Ovary (tissue), 10 donors: ENCODE measurements at regions of chr19 and their contacts with region 1.

Region 1: DNA sequence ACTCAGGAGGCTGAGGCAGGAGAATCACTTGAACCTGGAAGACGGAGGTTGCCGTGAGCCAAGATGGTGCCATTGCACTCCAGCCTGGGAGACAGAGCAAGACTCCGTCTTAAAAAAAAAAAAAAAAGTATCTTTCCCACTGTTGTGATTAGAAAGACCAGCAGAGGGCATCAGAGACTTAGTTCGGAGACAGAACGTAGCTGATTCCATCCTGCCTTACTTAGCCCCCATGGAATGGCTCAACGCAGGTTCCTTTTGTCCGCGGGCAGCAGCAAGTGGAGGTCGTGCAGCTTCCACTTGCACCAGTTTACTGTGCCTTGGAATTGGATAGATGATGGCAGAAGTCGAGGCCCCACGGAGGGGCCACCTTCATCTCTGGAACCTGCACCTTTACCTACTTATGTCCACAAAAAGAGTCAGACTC is 8.1 kb downstream of the TIMM29 start:
- DNase-seq: peak; percentile 54 to 71 (median 58)
- H3K4me3 ChIP-seq: peak overlapping the region; percentile 18
- H3K27ac ChIP-seq: no peak overlapping the region
- H3K4me1 ChIP-seq: no peaks in the 10 kb centered on the region
- H3K27me3 ChIP-seq: no peaks in the 10 kb centered on the region
- CTCF ChIP-seq: peak; percentile 38 to 63 (median 45)
- EP300 ChIP-seq: no peak
- POLR2A ChIP-seq: no peak

Region 2: DNA sequence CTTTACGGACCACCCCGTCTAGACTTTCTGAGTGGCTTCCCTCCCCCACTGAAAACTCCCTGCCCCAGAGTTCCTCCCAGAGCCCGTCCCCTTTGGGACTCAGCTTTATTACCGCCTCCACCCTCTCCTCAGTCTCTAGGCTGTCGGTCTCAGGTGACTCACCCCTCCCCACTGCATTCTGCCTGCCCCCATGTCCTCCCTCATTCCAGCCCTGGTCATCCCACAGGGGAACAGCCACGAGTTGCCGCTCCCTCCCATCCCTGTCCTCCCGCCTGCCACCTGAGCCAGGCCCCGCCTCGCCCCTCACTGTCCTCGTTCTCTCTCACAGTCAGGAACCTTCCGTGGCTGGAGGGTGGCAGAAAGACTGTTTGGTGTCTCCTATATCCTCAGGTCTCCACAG is 81.5 kb after region 1 on chr19:
- intact Hi-C with region 1: loop called in 3 of 4 experiments (anchors 5 to 10 kb)
- DNase-seq: no peak
- H3K4me3 ChIP-seq: no peak overlapping the region
- H3K27ac ChIP-seq: no peak overlapping the region
- H3K4me1 ChIP-seq: no peaks in the 10 kb centered on the region
- H3K27me3 ChIP-seq: no peaks in the 10 kb centered on the region
- CTCF ChIP-seq: no peak
- EP300 ChIP-seq: no peak
- POLR2A ChIP-seq: no peak

Region 3: GRCh38 chr19:11106477-11106876 is 169.8 kb after region 1 on chr19:
- intact Hi-C with region 1: loop called in 2 of 4 experiments (anchors 10 kb)
- DNase-seq: no peak
- H3K4me3 ChIP-seq: no peak overlapping the region
- H3K27ac ChIP-seq: no peak overlapping the region
- H3K4me1 ChIP-seq: no peaks in the 10 kb centered on the region
- H3K27me3 ChIP-seq: no peaks in the 10 kb centered on the region
- CTCF ChIP-seq: no peak
- EP300 ChIP-seq: no peak
- POLR2A ChIP-seq: no peak

Region 4: DNA sequence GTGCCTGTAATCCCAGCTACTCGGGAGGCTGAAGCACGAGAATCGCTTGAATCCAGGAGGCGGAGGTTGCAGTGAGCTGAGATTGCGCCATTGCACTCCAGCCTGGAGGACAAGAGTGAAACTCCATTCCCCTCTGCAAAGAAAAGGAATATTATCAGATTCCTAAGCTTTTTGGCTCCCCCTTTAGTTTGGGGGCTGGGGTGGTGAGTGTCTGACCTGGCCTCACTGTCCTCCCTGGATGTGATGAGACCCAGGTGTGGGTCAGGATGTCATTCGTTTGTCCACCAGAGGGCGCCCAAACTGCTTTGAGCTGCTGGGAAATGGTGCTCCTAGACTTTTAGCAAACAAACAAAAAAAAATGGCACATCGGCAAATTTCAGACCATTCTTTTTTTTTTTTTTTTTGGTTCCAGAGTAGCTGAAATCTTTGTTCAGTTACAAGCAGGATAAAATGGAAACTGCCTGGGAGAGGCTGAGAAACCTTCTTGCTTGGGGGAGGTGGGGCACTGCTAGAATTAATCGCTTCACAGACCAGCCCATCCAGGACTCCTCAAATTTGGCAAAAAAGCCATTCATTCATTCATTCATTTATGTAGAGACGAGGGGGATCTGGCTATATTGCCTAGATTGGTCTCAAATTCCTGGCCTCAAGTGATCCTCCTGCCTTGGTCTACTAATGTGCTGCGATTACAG is 189.5 kb after region 1 on chr19:
- intact Hi-C with region 1: loop called in 2 of 4 experiments (anchors 5 to 10 kb)
- DNase-seq: peak; percentile 86 to 91 (median 89)
- H3K4me3 ChIP-seq: no peak overlapping the region
- H3K27ac ChIP-seq: peak overlapping the region in 1 of 2 donors; percentile 22
- H3K4me1 ChIP-seq: peaks cover 3% of the 10 kb centered on the region
- H3K27me3 ChIP-seq: no peaks in the 10 kb centered on the region
- CTCF ChIP-seq: peak; percentile 67 to 85 (median 79)
- EP300 ChIP-seq: no peak
- POLR2A ChIP-seq: no peak